Natural killer cell (primary cell): ENCODE measurements at regions of chr3 and their contacts with region 1.

Region 1: GRCh38 chr3:179347345-179348194 is at the start of gene MFN1:
- DNase-seq: peak; percentile 81 to 95
- ATAC-seq: peak; percentile 98 to 99 (median 99)
- H3K4me3 ChIP-seq: peak within 1 kb of the TSS; percentile 90
- H3K4me3 Mint-ChIP-seq: peak within 1 kb of the TSS; percentile 95
- H3K27ac ChIP-seq: peak within 1 kb of the TSS; percentile 66
- H3K27ac Mint-ChIP-seq: peak within 1 kb of the TSS; percentile 90 to 98
- H3K4me1 ChIP-seq: peaks cover 10% of the 10 kb centered on the region
- H3K4me1 Mint-ChIP-seq: peaks cover 17 to 18% of the 10 kb centered on the region in 2 donors
- H3K27me3 ChIP-seq: no peaks in the 10 kb centered on the region
- H3K27me3 Mint-ChIP-seq: no peaks in the 10 kb centered on the region
- CTCF ChIP-seq: no peak
- total RNA-seq, gene MFN1: 42.4 to 52.9 (median 47.2) TPM

Region 2: DNA sequence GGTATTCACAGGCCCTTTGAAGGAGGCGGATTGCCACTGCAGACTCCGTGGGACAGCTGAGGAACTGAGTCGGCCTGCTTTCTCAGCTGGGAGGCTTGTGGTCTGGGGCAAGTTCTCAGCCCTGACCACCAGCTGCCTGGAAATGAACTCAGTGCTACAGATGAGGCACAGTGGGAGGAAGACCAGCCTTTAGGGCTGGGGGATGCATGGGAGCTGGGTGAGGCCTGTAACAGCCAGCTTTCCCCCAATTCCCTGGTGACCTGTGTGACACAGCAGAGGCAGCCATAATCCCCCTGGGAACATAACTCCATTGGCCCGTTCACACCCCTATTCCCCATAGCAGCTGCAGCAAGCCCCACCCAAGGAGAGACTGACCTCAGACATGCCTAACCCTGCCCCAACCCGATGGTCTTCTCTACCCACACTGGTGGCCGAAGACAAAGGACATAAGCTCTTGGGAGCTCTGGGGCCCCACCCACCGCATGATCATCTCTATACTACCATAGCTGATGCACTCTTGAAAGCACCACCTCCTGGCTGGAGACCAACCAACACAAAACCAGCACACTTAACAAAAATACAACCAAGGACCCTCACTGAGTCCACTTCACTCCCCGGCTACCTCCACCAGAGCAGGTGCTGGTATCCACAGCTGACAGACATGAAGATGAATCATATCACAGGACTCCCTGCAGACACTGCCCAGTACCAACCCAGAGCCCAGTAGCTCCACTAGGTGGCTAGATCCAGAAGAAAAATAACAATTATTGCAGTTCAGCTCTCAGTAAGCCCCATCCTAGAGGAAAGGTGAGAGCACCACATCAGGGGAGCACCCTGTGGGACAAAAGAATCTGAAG is 300.8 kb before region 1 on chr3:
- intact Hi-C with region 1: no loop called
- DNase-seq: no peak
- ATAC-seq: peak; percentile 35 to 76 (median 47)
- H3K4me3 ChIP-seq: no peak overlapping the region
- H3K4me3 Mint-ChIP-seq: peak overlapping the region; percentile 73
- H3K27ac ChIP-seq: peak overlapping the region; percentile 1
- H3K27ac Mint-ChIP-seq: peak overlapping the region; percentile 16 to 51
- H3K4me1 ChIP-seq: peaks cover 12% of the 10 kb centered on the region
- H3K4me1 Mint-ChIP-seq: peaks cover 51 to 70% of the 10 kb centered on the region in 2 donors
- H3K27me3 ChIP-seq: no peaks in the 10 kb centered on the region
- H3K27me3 Mint-ChIP-seq: no peaks in the 10 kb centered on the region
- CTCF ChIP-seq: no peak

Region 3: DNA sequence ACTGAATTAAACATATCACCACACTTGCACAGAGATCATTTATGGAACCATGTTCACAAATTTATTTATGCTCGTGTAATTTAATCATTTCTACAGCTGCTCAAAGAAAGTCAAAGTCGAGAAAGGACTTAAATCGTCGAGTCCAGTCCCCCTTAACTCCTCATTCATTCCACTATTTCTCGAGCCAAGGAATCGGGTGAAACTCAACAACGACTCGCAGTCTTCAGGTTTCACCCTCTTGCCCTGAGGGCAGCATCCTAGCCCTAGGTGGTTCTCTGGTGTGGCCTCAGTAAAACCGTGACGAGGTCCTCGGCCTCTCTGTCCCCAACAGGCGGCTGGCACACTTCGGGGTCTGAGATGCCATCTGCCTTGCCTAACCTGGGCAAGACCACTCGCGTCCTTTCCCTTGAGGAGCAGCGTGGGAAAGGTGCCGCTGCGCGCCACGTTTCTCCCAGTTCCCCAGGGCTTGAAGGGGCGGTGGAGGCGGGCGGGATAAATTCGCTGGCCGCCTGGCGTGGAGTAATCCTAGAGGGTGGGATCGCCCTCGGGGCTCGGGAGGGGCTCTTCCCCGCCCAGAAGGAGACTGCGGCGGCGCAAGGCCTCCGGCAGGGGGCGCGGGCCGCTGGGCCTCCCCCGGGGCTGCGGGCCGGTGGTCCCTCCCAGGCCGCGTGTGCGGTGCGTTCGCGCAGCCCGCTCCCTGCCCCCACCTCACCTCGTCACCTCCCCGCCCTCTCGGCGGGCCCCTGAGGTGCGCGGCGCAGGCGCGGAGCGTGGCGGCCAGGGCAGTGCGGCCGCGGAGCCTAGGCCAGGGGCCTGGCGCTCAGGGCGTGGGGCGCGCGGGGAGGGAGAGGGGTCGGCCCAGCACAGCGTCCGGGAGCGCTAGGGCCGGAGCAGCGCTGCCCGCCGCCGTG is 25.0 kb before region 1 on chr3 and contains the start of gene ZNF639:
- intact Hi-C with region 1: loop called (anchors 1 kb)
- DNase-seq: peak; percentile 85 to 95
- ATAC-seq: peak; percentile 88 to 96 (median 89)
- H3K4me3 ChIP-seq: peak within 1 kb of the TSS; percentile 98
- H3K4me3 Mint-ChIP-seq: peak within 1 kb of the TSS; percentile 90
- H3K27ac ChIP-seq: peak within 1 kb of the TSS; percentile 97
- H3K27ac Mint-ChIP-seq: peak within 1 kb of the TSS; percentile 92 to 94
- H3K4me1 ChIP-seq: peaks cover 17% of the 10 kb centered on the region
- H3K4me1 Mint-ChIP-seq: peaks cover 29% of the 10 kb centered on the region in 2 donors
- H3K27me3 ChIP-seq: no peaks in the 10 kb centered on the region
- H3K27me3 Mint-ChIP-seq: no peaks in the 10 kb centered on the region
- CTCF ChIP-seq: peak; percentile 80
- total RNA-seq, gene ZNF639: 51.8 to 54.5 (median 53.5) TPM